Prostate gland (tissue), 2 donors: ENCODE measurements at regions of chr7 and their contacts with region 1.

Region 1: GRCh38 chr7:143008007-143008901 is 18.7 kb downstream of the OR9A2 start:
- DNase-seq: peak; percentile 74
- H3K4me3 ChIP-seq: no peak overlapping the region
- H3K27ac ChIP-seq: no peak overlapping the region
- H3K4me1 ChIP-seq: no peaks in the 10 kb centered on the region
- H3K27me3 ChIP-seq: no peaks in the 10 kb centered on the region
- CTCF ChIP-seq: peak; percentile 93 to 98 (median 97)
- POLR2A ChIP-seq: no peak

Region 2: GRCh38 chr7:143214789-143215679 is 206.8 kb after region 1 on chr7:
- intact Hi-C with region 1: loop called (anchors 1 kb)
- DNase-seq: peak; percentile 49
- H3K4me3 ChIP-seq: no peak overlapping the region
- H3K27ac ChIP-seq: no peak overlapping the region
- H3K4me1 ChIP-seq: no peaks in the 10 kb centered on the region
- H3K27me3 ChIP-seq: no peaks in the 10 kb centered on the region
- CTCF ChIP-seq: peak; percentile 93 to 99 (median 99)
- POLR2A ChIP-seq: no peak